ENCODE measurements at regions of chr5 and their contacts with region 1.

Region 1: GRCh38 chr5:79853676-79854418 is 137.2 kb downstream of the MTX3 start:
- DNase-seq: no peak
- ATAC-seq: peak in 1 of 4 donors; percentile 26
- H3K4me3 ChIP-seq: no peak overlapping the region
- H3K27ac ChIP-seq: no peak overlapping the region
- H3K4me1 ChIP-seq: no peaks in the 10 kb centered on the region
- H3K27me3 ChIP-seq: no peaks in the 10 kb centered on the region
- CTCF ChIP-seq: no peak
- POLR2A ChIP-seq: no peak

Region 2: DNA sequence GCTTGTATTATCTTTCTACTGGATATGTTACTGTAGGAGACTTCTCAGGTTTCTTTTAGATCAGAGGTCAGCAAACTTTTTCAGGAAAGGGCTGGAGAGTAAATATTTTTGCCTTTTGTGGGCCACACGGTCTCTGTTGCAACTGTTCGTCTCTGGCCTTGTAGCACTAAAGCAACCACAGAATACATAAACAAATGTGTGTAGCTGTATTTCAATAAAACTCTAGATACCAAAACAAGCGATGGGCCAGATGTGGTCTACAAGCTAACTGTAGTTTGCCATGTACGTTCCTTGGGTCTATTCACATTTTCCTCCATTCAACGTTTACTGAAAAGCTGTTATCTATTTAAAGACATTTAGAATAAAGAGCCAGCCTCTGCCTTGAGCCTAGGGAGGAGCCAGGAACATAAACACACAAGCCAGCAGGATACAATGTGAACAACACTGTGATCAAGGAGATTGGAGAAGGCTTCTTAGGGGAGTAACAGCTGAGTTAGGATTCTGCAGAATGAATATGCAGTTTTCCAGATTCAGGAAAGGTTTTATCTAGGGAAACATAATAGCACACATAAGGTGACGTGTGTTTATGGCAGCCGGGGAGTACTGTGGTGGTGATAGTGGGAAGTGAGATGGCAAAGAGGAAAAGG is 306.9 kb before region 1 on chr5:
- intact Hi-C with region 1: no loop called
- DNase-seq: no peak
- ATAC-seq: peak; percentile 81 to 90 (median 87)
- H3K4me3 ChIP-seq: no peak overlapping the region
- H3K27ac ChIP-seq: peak overlapping the region in 2 of 3 donors; percentile 61 to 73
- H3K4me1 ChIP-seq: peaks cover 0 to 24% (median 8%) of the 10 kb centered on the region in 4 donors
- H3K27me3 ChIP-seq: no peaks in the 10 kb centered on the region
- CTCF ChIP-seq: no peak
- POLR2A ChIP-seq: no peak

Region 3: DNA sequence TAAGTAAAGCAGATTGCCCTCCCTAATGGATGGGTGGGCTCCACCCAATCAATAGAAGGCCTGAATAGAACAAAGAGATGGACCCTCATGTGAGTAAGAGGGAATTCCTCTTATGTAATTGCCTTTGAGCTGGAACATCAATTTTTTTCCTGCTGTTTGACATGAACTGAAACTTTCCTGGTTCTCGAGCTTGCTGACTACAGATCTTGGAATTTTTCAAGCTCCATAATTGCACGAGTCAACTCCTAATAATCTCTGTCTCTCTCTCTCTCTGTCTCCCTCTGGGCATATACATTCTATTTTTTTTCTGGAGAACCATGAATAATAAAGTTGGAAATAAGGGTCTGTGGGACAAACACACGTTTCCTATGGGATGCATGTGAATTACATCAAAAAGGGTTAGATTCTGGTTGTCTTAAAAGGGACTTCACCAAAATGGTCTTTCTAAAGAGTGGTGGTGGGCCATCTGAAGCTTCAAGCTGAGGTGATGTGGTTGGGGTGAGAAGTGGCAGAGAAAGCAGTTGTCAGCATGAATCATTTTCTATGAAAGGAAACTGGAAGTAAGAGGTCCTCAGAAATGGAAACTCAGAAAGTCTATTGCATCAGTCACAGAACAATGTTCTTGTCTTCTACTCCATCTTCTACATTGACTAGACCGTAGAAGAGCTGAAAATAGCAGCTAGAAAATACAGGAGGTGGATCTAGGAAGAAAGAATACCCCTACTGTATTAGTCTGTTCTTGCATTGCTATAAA is 292.9 kb before region 1 on chr5:
- intact Hi-C with region 1: loop called in 1 of 2 experiments (anchors 5 kb)
- DNase-seq: no peak
- ATAC-seq: peak in 2 of 4 donors; percentile 38 to 47
- H3K4me3 ChIP-seq: no peak overlapping the region
- H3K27ac ChIP-seq: no peak overlapping the region
- H3K4me1 ChIP-seq: peaks cover 0 to 2% (median 0%) of the 10 kb centered on the region in 4 donors
- H3K27me3 ChIP-seq: no peaks in the 10 kb centered on the region
- CTCF ChIP-seq: no peak
- POLR2A ChIP-seq: no peak